GM12878 (cell line): ENCODE measurements at regions of chr17 and their contacts with region 1.

Region 1: GRCh38 chr17:37259030-37259735 is 116.6 kb upstream of the C17orf78 start:
- DNase-seq: no peak
- ATAC-seq: no peak
- H3K4me3 ChIP-seq: no peak overlapping the region
- H3K27ac ChIP-seq: no peak overlapping the region
- H3K4me1 ChIP-seq: no peaks in the 10 kb centered on the region
- H3K27me3 ChIP-seq: no peaks in the 10 kb centered on the region
- CTCF ChIP-seq: no peak
- EP300 ChIP-seq: no peak
- POLR2A ChIP-seq: no peak
- RAD21 ChIP-seq: no peak

Region 2: GRCh38 chr17:36665417-36665816 is 593.8 kb before region 1 on chr17:
- CTCF ChIA-PET with region 1: no interaction called
- POLR2A ChIA-PET with region 1: no interaction called
- RAD21 ChIA-PET with region 1: no interaction called
- SMC1A ChIA-PET with region 1: no interaction called
- in situ Hi-C with region 1: no loop called
- intact Hi-C with region 1: no loop called
- DNase-seq: no peak
- ATAC-seq: no peak
- H3K4me3 ChIP-seq: no peak overlapping the region
- H3K27ac ChIP-seq: no peak overlapping the region
- H3K4me1 ChIP-seq: no peaks in the 10 kb centered on the region
- H3K27me3 ChIP-seq: no peaks in the 10 kb centered on the region; a peak in 1 of 4 replicates
- CTCF ChIP-seq: no peak
- EP300 ChIP-seq: no peak
- POLR2A ChIP-seq: no peak
- RAD21 ChIP-seq: no peak

Region 3: DNA sequence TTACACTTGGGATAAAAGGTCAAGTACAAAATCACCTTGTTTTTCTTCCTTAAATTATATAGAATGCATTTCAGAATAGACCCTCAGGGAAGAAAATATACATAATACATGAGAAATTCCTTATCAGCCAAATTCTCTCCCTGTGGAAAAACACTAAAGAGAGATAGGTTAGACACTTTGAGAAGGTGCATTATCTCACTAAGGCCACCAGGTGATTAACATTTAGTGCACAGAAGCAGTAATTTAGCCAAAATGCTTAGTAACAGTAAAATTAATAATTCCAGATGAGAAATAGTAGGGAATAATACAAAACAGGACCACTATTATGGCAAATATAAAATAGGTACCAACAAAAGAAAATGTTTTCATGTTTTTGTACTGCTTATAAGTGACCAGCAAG is 68.7 kb before region 1 on chr17:
- CTCF ChIA-PET with region 1: no interaction called
- POLR2A ChIA-PET with region 1: no interaction called
- RAD21 ChIA-PET with region 1: no interaction called
- SMC1A ChIA-PET with region 1: no interaction called
- in situ Hi-C with region 1: no loop called
- intact Hi-C with region 1: no loop called
- DNase-seq: no peak
- ATAC-seq: no peak
- H3K4me3 ChIP-seq: no peak overlapping the region
- H3K27ac ChIP-seq: no peak overlapping the region
- H3K4me1 ChIP-seq: no peaks in the 10 kb centered on the region
- H3K27me3 ChIP-seq: no peaks in the 10 kb centered on the region
- CTCF ChIP-seq: peak in 2 of 3 experiments; percentile 11 to 16; a peak in 1 of 6 replicates
- EP300 ChIP-seq: no peak
- POLR2A ChIP-seq: no peak
- RAD21 ChIP-seq: no peak

Region 4: DNA sequence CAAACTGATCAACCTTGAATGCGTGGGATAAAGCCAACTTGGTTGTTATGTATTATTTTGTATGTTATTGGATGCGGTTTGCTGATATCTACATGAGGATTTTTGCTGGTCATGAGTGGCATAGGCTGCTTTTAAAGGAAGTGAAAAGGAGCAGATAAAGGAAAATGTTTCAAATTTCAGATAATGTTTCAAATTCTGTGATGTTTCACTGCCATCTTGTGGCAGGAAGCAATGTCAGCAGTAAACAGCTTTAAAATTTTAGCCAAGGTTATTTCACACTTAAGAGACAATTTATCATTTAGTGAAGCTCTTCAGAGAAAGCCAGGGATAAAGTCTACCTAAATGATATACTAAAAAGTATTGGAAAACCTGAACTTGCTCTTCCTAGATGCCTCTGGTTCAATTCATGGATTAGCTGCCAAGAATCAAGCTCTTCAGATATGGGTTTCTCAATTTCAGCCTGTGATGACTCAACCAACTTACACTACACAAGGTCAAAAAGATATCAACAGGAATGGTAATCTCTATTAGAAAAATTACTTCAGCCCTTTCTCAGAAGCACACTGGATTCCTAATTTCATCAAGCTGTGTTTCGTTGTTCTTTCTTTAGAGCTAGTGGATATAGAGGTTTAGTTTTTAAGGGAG is 19.4 kb before region 1 on chr17:
- CTCF ChIA-PET with region 1: interaction called, 10 read pairs
- POLR2A ChIA-PET with region 1: no interaction called
- RAD21 ChIA-PET with region 1: no interaction called
- SMC1A ChIA-PET with region 1: interaction called, 5 read pairs
- in situ Hi-C with region 1: no loop called
- intact Hi-C with region 1: no loop called
- DNase-seq: no peak
- ATAC-seq: no peak
- H3K4me3 ChIP-seq: no peak overlapping the region
- H3K27ac ChIP-seq: no peak overlapping the region
- H3K4me1 ChIP-seq: no peaks in the 10 kb centered on the region
- H3K27me3 ChIP-seq: no peaks in the 10 kb centered on the region
- CTCF ChIP-seq: peak; percentile 43 to 67 (median 60); a peak in 5 of 6 replicates
- EP300 ChIP-seq: no peak
- POLR2A ChIP-seq: no peak
- RAD21 ChIP-seq: peak; percentile 53